Endothelial cell of umbilical vein (primary cell): ENCODE measurements at regions of chr20 and their contacts with region 1.

Region 1: GRCh38 chr20:35816339-35816738 is 44.5 kb downstream of the PHF20 start:
- DNase-seq: no peak
- H3K4me3 ChIP-seq: no peak overlapping the region
- H3K27ac ChIP-seq: no peak overlapping the region
- H3K4me1 ChIP-seq: no peaks in the 10 kb centered on the region
- H3K27me3 ChIP-seq: no peaks in the 10 kb centered on the region
- CTCF ChIP-seq: no peak
- POLR2A ChIP-seq: no peak

Region 2: DNA sequence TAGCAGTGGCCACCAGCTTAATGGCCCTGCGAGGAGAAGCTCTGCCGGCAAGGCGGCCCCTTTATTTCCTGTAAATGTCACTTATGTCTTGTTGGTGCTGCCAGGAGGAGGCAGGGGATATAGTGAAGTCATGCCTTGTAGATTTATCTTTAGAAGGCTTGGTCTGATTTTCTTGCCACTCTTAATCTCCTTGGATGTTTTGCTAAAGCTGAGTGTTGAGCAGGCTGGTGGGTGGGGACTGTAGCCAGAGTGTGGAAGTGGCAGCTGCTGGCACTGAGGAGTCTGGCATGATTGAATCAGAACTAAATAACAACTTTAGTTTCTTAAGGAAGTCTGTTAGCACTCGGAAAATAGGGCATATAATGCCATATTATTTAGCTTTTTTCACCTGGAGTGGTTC is 33.4 kb after region 1 on chr20:
- CTCF ChIA-PET with region 1: no interaction called
- POLR2A ChIA-PET with region 1: interaction called, 10 read pairs
- dilution Hi-C with region 1: no loop called
- intact Hi-C with region 1: no loop called
- DNase-seq: peak; percentile 22
- H3K4me3 ChIP-seq: no peak overlapping the region
- H3K27ac ChIP-seq: no peak overlapping the region
- H3K4me1 ChIP-seq: no peaks in the 10 kb centered on the region
- H3K27me3 ChIP-seq: no peaks in the 10 kb centered on the region
- CTCF ChIP-seq: no peak
- POLR2A ChIP-seq: no peak